ENCODE measurements at regions of chr2 and their contacts with region 1.

Region 1: DNA sequence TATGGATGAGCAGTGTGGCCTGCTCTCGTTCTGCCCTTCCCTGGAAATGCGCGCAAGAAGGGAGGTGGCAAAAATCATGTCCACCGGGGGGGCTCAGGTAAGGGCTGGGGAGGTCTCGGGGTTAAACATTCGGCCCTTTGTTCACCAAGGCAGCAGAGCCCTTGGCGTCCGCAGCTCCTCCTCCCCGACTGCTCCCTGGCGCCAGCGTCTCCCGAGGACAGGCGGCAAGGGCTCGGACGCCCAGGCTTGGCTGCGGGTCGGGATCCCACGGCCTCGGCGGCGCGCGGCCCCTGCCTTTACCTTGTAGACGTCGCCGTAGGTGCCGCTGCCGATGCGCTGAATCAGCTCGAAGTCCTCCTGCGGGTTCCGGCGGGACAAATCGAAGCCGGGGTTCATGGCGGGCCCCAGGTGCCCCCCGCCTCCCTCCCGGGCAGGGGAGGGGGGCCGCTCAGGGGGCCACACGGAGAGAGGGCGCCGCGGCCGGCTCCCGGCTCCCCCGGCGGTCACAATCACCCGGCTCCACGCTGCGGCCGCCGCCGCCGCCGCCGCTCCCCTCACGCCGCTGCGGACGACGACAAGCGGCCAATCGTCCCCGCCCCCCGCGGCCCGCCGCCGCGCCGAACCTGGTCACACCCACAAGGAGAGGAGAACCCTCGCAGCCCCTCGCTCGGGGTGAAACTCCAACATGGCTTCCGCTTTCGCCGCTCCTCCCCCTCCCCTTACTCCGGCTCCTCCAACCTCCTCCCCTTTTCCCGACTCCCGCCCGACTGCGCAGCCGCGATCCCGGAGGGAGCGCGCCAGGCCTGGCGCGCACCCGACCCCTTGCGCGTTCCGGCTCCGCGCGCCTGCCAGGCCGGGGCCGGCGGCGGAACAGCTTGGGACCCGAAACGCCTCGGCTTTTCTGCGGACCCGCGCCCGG is at the start of gene MAP4K3:
- DNase-seq: peak; percentile 95 to 97 (median 96)
- ATAC-seq: peak; percentile 94 to 95
- H3K4me3 ChIP-seq: peak within 1 kb of the TSS; percentile 61
- H3K27ac ChIP-seq: peak within 1 kb of the TSS; percentile 98
- H3K4me1 ChIP-seq: no peaks in the 10 kb centered on the region
- H3K27me3 ChIP-seq: no peaks in the 10 kb centered on the region
- total RNA-seq, gene MAP4K3: 39.3 to 50.0 (median 43.5) TPM

Region 2: DNA sequence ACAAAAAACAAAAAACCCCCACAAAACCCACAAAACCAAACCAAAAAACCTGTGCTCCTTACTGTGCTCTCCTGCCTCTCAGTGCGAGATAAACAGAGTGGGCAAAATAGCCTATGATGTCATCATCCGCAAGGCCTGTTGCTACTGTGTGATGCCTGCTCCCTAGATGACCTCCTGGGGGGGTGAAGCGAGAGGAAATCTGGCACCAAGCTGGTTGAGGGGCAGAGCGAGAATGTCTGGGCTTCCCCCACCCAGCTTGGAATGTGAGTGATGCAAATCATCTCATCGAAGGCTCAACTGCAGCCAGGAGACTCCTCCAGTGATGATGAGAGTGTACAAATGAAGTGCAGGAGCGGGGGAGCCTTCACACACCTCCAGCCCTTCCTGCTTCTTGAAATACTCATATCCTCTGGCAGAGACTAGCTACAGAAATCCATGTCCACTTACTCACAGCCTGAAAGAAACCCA is 58.0 kb after region 1 on chr2:
- intact Hi-C with region 1: loop called in 1 of 4 experiments (anchors 5 kb)
- DNase-seq: peak in 1 of 3 donors; percentile 22
- ATAC-seq: peak; percentile 59 to 67
- H3K4me3 ChIP-seq: no peak overlapping the region
- H3K27ac ChIP-seq: peak overlapping the region; percentile 70
- H3K4me1 ChIP-seq: peaks cover 11% of the 10 kb centered on the region
- H3K27me3 ChIP-seq: no peaks in the 10 kb centered on the region

Measured in right cardiac atrium (tissue), 5 donors.